Transverse colon (tissue), 4 donors: ENCODE measurements at regions of chr15 and their contacts with region 1.

Region 1: GRCh38 chr15:68383161-68384074 is 48.5 kb downstream of the ITGA11 start:
- DNase-seq: peak; percentile 23
- H3K4me3 ChIP-seq: no peak overlapping the region
- H3K27ac ChIP-seq: no peak overlapping the region
- H3K4me1 ChIP-seq: no peaks in the 10 kb centered on the region
- H3K27me3 ChIP-seq: no peaks in the 10 kb centered on the region
- CTCF ChIP-seq: peak; percentile 66 to 82 (median 72)
- EP300 ChIP-seq: no peak
- POLR2A ChIP-seq: no peak

Region 2: GRCh38 chr15:68229386-68230156 is 153.8 kb before region 1 on chr15 and contains the start of gene CLN6:
- in situ Hi-C with region 1: loop called in 1 of 4 experiments (anchors 25 kb)
- intact Hi-C with region 1: no loop called
- DNase-seq: peak; percentile 87
- H3K4me3 ChIP-seq: peak within 1 kb of the TSS; percentile 88 to 98 (median 91)
- H3K27ac ChIP-seq: peak within 1 kb of the TSS; percentile 91 to 93 (median 92)
- H3K4me1 ChIP-seq: peaks cover 7 to 43% (median 20%) of the 10 kb centered on the region in 4 donors
- H3K27me3 ChIP-seq: no peaks in the 10 kb centered on the region
- CTCF ChIP-seq: no peak
- EP300 ChIP-seq: no peak
- POLR2A ChIP-seq: peak; percentile 41
- total RNA-seq, gene CLN6: 13.8 to 28.1 (median 18.2) TPM

Region 3: GRCh38 chr15:68278595-68279405 is 104.6 kb before region 1 on chr15:
- in situ Hi-C with region 1: no loop called
- intact Hi-C with region 1: no loop called
- DNase-seq: no peak
- H3K4me3 ChIP-seq: peak overlapping the region; percentile 53 to 89 (median 76)
- H3K27ac ChIP-seq: peak overlapping the region; percentile 97 to 99 (median 98)
- H3K4me1 ChIP-seq: peaks cover 17 to 52% (median 40%) of the 10 kb centered on the region in 4 donors
- H3K27me3 ChIP-seq: no peaks in the 10 kb centered on the region
- CTCF ChIP-seq: no peak
- EP300 ChIP-seq: no peak
- POLR2A ChIP-seq: no peak

Region 4: GRCh38 chr15:68304589-68305337 is 78.7 kb before region 1 on chr15:
- in situ Hi-C with region 1: loop called in 1 of 4 experiments (anchors 10 kb)
- intact Hi-C with region 1: loop called (anchors 5 kb)
- DNase-seq: no peak
- H3K4me3 ChIP-seq: no peak overlapping the region
- H3K27ac ChIP-seq: no peak overlapping the region
- H3K4me1 ChIP-seq: peaks cover 6 to 20% (median 10%) of the 10 kb centered on the region in 4 donors
- H3K27me3 ChIP-seq: no peaks in the 10 kb centered on the region
- CTCF ChIP-seq: no peak
- EP300 ChIP-seq: no peak
- POLR2A ChIP-seq: no peak